GM10248 (cell line): ENCODE measurements at regions of chr17 and their contacts with region 1.

Region 1: GRCh38 chr17:49370971-49371834 is 9.2 kb upstream of the ZNF652 start:
- DNase-seq: no peak
- CTCF ChIP-seq: no peak

Region 2: GRCh38 chr17:49315551-49316257 is 55.5 kb before region 1 on chr17:
- CTCF ChIA-PET with region 1: interaction called, 71 read pairs
- POLR2A ChIA-PET with region 1: no interaction called
- DNase-seq: peak; percentile 78
- CTCF ChIP-seq: peak; percentile 68

Region 3: DNA sequence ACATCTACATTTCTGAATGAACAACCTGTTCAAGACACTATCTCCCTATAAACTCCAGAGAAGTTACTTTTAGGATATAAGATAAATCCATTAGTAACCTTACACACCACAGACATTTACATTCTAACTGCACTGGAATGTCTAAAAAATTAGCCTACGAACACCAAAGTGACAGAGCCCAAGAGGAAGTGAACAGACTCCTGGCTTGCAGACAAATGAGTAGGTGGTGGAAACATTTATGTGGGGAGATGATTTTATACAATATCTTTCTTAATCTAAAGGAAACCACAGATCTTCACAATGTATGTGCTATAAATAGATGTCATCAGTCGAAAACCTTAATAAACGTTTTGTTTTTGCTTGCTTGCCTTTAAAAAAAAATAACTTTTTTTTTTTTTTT is 27.9 kb before region 1 on chr17:
- CTCF ChIA-PET with region 1: interaction called, 36 read pairs
- POLR2A ChIA-PET with region 1: interaction called, 7 read pairs
- DNase-seq: no peak
- CTCF ChIP-seq: no peak

Region 4: GRCh38 chr17:49358641-49359247 is 12.5 kb before region 1 on chr17:
- CTCF ChIA-PET with region 1: interaction called, 22 read pairs
- POLR2A ChIA-PET with region 1: no interaction called
- DNase-seq: peak; percentile 38
- CTCF ChIP-seq: no peak

Region 5: GRCh38 chr17:49401971-49402611 is 30.9 kb after region 1 on chr17:
- CTCF ChIA-PET with region 1: interaction called, 13 read pairs
- POLR2A ChIA-PET with region 1: no interaction called
- DNase-seq: no peak
- CTCF ChIP-seq: no peak